Dorsolateral prefrontal cortex (tissue), 120 donors: ENCODE measurements at regions of chr2 and their contacts with region 1.

Region 1: DNA sequence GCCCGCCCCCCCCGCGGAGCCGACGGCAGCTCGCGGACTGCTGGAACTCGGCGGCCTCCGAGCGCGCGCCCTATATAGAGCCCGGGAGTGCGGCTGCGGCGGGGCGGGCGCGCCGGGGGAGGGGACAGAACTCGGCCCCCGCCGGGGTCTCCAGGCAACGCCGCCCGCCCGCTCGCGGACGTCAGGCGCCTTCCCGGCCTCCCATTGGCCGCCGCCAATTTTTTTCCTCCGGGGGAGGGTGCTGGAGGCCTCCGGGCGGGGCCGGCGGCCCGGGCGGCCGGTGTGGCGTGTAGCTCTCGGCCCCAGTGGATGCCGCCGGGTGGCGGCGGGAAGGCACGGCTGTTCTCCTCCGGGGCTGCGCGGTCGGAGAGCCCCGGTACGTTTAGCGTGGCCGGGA is at the start of gene ZFP36L2:
- DNase-seq: peak; percentile 71 to 98 (median 94)
- H3K4me3 ChIP-seq: peak within 1 kb of the TSS; percentile 51 to 93 (median 79)
- H3K27ac ChIP-seq: peak within 1 kb of the TSS; percentile 89 to 100 (median 98)
- H3K27me3 ChIP-seq: peaks cover 0 to 19% (median 0%) of the 10 kb centered on the region in 45 donors
- CTCF ChIP-seq: peak in 8 of 56 donors; percentile 4 to 26 (median 18)
- total RNA-seq, gene ZFP36L2: 13.0 to 86.0 (median 32.4) TPM

Region 2: DNA sequence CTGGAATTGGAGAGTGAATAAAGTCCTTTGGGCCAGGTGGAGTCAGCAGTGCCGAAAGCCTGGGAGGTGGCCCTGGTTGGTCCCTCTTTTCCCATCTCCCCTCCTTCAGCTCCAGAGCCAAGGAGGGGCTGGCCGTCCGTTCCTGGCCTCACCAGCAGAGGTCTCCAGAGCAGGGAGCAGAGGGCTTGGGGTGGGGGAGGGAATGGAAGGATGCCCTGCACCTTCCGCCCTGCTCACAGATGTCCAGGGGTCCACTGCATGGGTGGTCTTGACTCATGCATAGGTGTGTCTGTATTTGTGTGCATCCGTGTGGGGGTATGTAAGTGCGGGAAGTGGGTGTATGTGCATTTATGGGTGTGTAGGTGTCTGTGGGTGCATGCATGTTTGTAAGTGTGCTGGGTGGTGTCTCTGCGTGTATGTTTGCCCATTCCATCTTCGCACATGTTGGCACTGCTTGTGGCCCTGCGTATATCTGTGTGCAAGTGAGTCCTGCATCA is 202.0 kb before region 1 on chr2:
- intact Hi-C with region 1: loop called (anchors 1 to 2 kb)
- DNase-seq: peak in 8 of 10 donors; percentile 47 to 78 (median 69)
- H3K4me3 ChIP-seq: no peak overlapping the region
- H3K27ac ChIP-seq: peak overlapping the region in 51 of 59 donors; percentile 0 to 93 (median 70)
- H3K27me3 ChIP-seq: no peaks in the 10 kb centered on the region
- CTCF ChIP-seq: peak; percentile 56 to 96 (median 83)